ENCODE measurements at regions of chr6 and their contacts with region 1.

Region 1: GRCh38 chr6:116667623-116668022 is 943 bp downstream of the ZUP1 start:
- DNase-seq: no peak
- H3K4me3 ChIP-seq: peak overlapping the region; percentile 67 to 100 (median 94)
- H3K27ac ChIP-seq: peak overlapping the region in 1 of 59 donors; percentile 84
- H3K27me3 ChIP-seq: no peaks in the 10 kb centered on the region
- CTCF ChIP-seq: no peak

Region 2: GRCh38 chr6:116570856-116571682 is 96.6 kb before region 1 on chr6 and contains the start of gene RWDD1:
- intact Hi-C with region 1: loop called in 1 of 2 experiments (anchors 10 kb)
- DNase-seq: peak; percentile 95 to 99 (median 99)
- H3K4me3 ChIP-seq: peak within 1 kb of the TSS; percentile 64 to 99 (median 88)
- H3K27ac ChIP-seq: peak within 1 kb of the TSS in 58 of 59 donors; percentile 62 to 96 (median 86)
- H3K27me3 ChIP-seq: no peaks in the 10 kb centered on the region
- CTCF ChIP-seq: peak in 50 of 56 donors; percentile 4 to 68 (median 38)
- total RNA-seq, gene RWDD1: 25.9 to 50.3 (median 37.6) TPM

Region 3: GRCh38 chr6:116726947-116727346 is 59.3 kb after region 1 on chr6:
- intact Hi-C with region 1: no loop called
- DNase-seq: no peak
- H3K4me3 ChIP-seq: no peak overlapping the region
- H3K27ac ChIP-seq: no peak overlapping the region
- H3K27me3 ChIP-seq: no peaks in the 10 kb centered on the region
- CTCF ChIP-seq: no peak

Region 4: DNA sequence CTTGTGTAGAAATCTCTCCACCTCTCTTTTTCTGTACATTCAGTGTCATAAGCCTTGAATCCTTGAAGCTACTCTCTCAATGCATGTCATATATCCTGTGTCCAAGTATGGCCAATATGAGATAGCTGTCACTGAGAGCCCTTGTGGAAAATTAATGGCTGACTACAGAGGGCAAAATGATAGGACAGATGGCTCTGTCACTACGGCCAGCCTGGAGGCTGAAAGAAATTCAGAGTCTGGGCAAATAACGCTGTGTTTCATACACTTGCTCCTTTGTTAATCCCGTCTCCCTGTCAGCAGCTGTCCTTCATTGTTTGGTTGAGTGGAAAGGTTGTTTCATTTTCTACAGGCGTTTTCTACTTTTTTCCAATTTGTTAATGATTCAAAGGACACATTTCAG is 527.4 kb after region 1 on chr6:
- intact Hi-C with region 1: no loop called
- DNase-seq: no peak
- H3K4me3 ChIP-seq: no peak overlapping the region
- H3K27ac ChIP-seq: no peak overlapping the region
- H3K27me3 ChIP-seq: peaks cover 0 to 13% (median 0%) of the 10 kb centered on the region in 45 donors
- CTCF ChIP-seq: no peak